ENCODE measurements at regions of chr9 and their contacts with region 1.

Region 1: GRCh38 chr9:121545875-121546423 is 46.3 kb upstream of the GGTA1 start:
- DNase-seq: peak; percentile 91
- ATAC-seq: peak; percentile 98
- H3K4me3 ChIP-seq: peak overlapping the region; percentile 35; the same call in 1 of the 2 replicates
- H3K27ac ChIP-seq: no peak overlapping the region
- H3K4me1 ChIP-seq: peaks cover 3% of the 10 kb centered on the region; the same call in 1 of the 2 replicates
- H3K27me3 ChIP-seq: no peaks in the 10 kb centered on the region
- CTCF ChIP-seq: peak; percentile 80

Region 2: DNA sequence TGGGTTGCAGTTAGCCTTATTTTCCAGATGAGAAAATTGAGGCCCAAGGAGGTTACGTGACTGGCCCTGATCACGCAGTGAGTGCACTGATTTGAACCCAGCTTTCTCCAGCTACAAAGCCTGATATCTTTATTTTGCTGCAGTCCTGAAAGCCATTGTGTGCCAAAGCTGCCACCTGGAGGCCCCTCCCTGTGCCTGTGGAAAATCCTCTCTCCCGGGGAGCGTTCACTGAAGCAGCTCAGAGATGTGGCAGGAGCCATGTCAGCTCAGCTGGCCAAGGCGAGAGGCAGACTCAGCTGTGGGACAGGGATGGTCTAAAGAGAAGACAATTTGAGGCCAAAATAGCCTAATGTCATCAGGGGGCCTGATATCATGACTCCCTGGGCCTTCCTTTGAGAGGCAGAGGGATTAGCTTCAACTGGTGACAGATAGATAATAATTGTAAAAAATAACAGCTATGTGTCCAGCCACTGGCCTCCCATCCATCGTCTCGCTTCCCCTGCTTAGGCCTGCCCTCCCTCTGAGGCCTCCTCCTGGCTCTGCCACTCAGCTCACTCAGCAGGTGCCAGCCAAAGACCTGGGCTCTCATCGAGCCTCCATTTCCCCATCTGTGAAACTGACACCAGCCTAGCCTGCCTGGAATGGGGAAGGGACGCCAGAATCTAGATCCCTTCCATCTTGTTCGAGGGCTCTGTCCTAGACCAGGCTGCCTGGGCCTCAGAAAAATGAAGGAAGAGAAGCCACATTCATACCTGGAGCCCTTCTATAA is 28.0 kb after region 1 on chr9:
- CTCF ChIA-PET with region 1: interaction called, 14 read pairs
- POLR2A ChIA-PET with region 1: no interaction called
- intact Hi-C with region 1: no loop called
- DNase-seq: no peak
- ATAC-seq: no peak
- H3K4me3 ChIP-seq: no peak overlapping the region
- H3K27ac ChIP-seq: no peak overlapping the region
- H3K4me1 ChIP-seq: peaks cover 5% of the 10 kb centered on the region; the same call in 1 of the 2 replicates
- H3K27me3 ChIP-seq: no peaks in the 10 kb centered on the region
- CTCF ChIP-seq: no peak; the same call in 1 of the 2 replicates

Region 3: DNA sequence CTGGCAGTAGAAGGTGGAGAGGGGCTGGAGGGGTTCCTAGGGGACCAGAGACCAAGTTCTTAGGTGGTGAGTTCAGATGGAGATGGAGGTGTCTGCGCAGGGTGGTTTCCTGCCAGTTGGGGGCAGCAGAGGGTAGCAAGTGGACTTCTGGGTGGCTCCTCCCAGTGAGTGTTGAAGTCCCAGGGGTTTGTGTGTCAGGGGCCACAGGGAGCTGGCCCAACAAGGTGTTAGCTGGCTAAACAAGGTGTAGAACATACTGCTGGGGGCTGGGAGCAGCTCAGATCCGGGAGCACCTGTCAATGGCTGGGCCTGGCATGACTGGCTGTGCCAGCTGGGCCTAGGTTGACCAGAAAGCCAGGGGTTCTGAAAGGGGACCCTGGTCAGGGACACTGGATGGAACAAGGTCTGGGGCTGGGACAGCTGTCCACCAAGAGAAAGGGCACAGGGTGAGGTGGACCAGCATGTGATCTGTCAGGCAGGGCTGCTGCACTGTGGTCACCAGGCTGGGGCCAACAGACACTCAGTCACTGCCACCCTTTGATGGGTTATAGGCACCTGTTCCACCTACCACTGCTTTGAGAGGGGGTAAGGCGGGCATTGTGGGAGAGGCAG is 141.1 kb after region 1 on chr9:
- CTCF ChIA-PET with region 1: interaction called, 4 read pairs
- POLR2A ChIA-PET with region 1: no interaction called
- intact Hi-C with region 1: loop called (anchors 2 kb)
- DNase-seq: peak; percentile 71
- ATAC-seq: peak; percentile 78
- H3K4me3 ChIP-seq: no peak overlapping the region
- H3K27ac ChIP-seq: no peak overlapping the region
- H3K4me1 ChIP-seq: peaks cover 12% of the 10 kb centered on the region
- H3K27me3 ChIP-seq: no peaks in the 10 kb centered on the region
- CTCF ChIP-seq: peak; percentile 82

Region 4: DNA sequence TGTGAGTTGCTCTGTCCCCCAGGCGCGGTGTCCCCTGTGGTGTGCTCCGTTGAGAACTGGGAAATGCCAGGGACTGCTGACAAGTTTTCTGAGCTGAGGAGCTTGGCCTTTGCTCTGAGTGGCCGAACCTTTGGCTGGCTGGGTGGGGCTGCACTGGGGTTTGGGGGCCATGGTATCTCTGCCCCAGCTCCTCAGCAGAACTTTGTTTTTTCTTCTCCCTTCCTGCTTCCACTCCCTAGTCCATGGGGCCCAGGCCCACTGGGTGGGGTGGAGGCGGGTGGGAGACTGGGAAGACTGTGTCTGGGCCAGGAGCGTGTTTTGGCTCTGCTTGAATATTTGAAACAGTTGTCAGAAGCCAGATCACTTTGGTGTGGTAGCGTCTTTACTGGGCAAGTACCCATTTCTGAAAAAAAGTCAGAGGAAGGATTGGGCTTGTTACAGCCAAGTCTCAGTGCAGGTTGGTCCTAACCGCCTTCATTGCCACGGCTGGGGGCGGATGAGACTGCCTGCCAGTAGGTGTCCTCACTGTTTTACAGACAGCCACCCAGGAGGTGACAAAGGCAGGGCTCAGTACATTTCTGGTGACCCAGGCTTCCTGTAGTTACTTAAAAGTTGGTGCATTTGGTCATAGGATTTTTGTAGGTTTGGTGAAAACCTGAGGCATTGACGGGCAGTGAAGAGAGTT is 198.2 kb after region 1 on chr9:
- CTCF ChIA-PET with region 1: no interaction called
- POLR2A ChIA-PET with region 1: no interaction called
- intact Hi-C with region 1: loop called (anchors 5 kb)
- DNase-seq: peak; percentile 60
- ATAC-seq: peak; percentile 75
- H3K4me3 ChIP-seq: peak overlapping the region; percentile 64
- H3K27ac ChIP-seq: 0 out of 2 replicates have a peak overlapping the region, but pooled peaks have one; percentile 5
- H3K4me1 ChIP-seq: peaks cover 13% of the 10 kb centered on the region
- H3K27me3 ChIP-seq: no peaks in the 10 kb centered on the region
- CTCF ChIP-seq: peak; percentile 67

Region 5: GRCh38 chr9:122005597-122005996 is 459.6 kb after region 1 on chr9:
- CTCF ChIA-PET with region 1: no interaction called
- POLR2A ChIA-PET with region 1: no interaction called
- intact Hi-C with region 1: loop called (anchors 5 kb)
- DNase-seq: peak; percentile 62
- ATAC-seq: peak; percentile 89
- H3K4me3 ChIP-seq: no peak overlapping the region
- H3K27ac ChIP-seq: no peak overlapping the region
- H3K4me1 ChIP-seq: no peaks in the 10 kb centered on the region
- H3K27me3 ChIP-seq: no peaks in the 10 kb centered on the region
- CTCF ChIP-seq: peak; percentile 67

Measured in PC-3 (cell line).